Left ventricle myocardium superior (tissue), 1 donor: ENCODE measurements at regions of chr1 and their contacts with region 1.

Region 1: GRCh38 chr1:194598098-194598497 is 1411.7 kb upstream of the B3GALT2 start:
- DNase-seq: peak; percentile 29
- ATAC-seq: peak; percentile 38

Region 2: GRCh38 chr1:193448682-193449461 is 1149.2 kb before region 1 on chr1:
- intact Hi-C with region 1: loop called (anchors 5 kb)
- DNase-seq: no peak
- ATAC-seq: no peak

Region 3: GRCh38 chr1:194477908-194478307 is 120.2 kb before region 1 on chr1:
- intact Hi-C with region 1: no loop called
- DNase-seq: no peak
- ATAC-seq: no peak

Region 4: GRCh38 chr1:194629011-194629410 is 30.9 kb after region 1 on chr1:
- intact Hi-C with region 1: no loop called
- DNase-seq: no peak
- ATAC-seq: no peak